ENCODE measurements at regions of chr19 and their contacts with region 1.

Region 1: DNA sequence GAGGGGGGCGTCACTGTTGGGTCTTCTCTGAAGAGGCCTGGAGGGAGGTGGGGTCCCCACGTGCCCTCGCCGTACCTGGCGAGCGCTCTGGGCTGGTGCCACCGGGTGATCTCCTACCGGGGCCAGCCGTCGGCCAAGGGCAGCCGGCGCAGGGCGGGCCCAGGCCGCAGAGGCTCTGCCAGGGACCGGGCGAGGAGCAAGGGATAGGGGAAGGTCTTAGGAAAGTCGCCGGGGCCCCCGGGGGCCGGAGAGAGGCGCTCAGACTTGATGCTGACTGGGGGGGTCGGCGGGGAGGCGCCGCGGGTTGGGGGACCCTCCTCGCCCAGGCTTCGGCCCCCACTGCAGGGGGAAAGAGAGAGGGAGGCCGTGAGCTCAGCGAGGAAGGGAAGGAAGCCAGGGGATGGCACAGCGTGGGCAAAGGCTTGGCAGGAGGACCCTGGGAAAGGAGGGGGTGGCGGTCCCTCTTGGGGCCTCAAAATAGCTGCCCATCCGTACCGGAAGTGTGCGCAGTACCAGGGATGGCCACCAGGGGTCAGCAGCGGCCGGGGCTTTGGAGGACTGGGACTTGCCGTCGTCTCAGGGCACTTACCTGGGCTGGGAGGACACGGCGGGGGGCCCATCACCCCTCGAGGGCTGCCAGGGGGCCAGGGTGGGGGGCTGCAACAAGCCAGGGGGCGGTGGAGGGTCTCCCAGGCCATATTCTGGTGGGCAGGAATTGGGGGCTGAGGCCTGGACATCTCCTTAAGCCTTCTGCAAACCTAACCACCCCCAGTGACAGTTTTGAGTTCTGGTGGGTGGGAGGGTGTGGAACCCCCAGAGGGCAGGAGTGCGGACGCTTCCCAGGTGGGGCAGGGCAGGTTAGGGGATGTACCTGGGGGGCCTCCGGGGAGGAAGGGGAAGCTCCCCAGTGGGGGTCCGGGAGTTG is 7.7 kb upstream of the TMEM161A start:
- DNase-seq: peak; percentile 62 to 98 (median 87)
- ATAC-seq: peak; percentile 82 to 98 (median 94)
- H3K4me3 ChIP-seq: no peak overlapping the region
- H3K27ac ChIP-seq: no peak overlapping the region
- H3K4me1 ChIP-seq: no peaks in the 10 kb centered on the region
- H3K27me3 ChIP-seq: no peaks in the 10 kb centered on the region
- CTCF ChIP-seq: peak; percentile 90 to 93 (median 91)

Region 2: DNA sequence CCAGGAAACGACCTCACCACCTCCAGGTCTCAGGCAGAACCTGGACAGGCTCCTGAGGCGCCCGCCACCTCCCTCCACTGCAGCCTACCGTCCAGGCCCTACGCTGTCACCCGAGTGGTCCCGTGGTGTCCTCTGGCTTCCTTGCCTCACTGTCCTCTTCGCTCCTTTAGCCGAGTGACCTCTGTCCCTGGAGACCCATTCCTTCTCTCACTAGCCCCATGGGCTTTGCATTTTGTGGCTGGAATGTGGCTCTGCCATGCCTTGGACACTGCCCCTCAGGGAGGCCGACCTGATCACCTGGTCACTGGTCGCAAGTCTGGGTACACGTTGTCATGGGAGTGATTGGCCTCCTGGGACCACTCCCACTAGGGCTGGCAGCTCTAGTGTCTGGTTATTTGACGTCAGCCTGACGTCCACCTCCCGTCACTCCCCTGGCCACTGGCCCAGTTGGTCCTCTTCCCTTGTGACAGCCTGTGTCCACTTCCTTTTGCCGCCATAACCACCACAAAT is 64.2 kb before region 1 on chr19:
- intact Hi-C with region 1: no loop called
- DNase-seq: no peak
- ATAC-seq: peak in 1 of 4 donors; percentile 11
- H3K4me3 ChIP-seq: no peak overlapping the region
- H3K27ac ChIP-seq: no peak overlapping the region
- H3K4me1 ChIP-seq: no peaks in the 10 kb centered on the region
- H3K27me3 ChIP-seq: no peaks in the 10 kb centered on the region
- CTCF ChIP-seq: no peak

Region 3: GRCh38 chr19:19342756-19343322 is 196.9 kb after region 1 on chr19:
- intact Hi-C with region 1: loop called in 1 of 3 experiments (anchors 5 kb)
- DNase-seq: peak; percentile 43 to 90 (median 76)
- ATAC-seq: peak; percentile 65 to 93 (median 88)
- H3K4me3 ChIP-seq: no peak overlapping the region
- H3K27ac ChIP-seq: no peak overlapping the region
- H3K4me1 ChIP-seq: no peaks in the 10 kb centered on the region
- H3K27me3 ChIP-seq: no peaks in the 10 kb centered on the region
- CTCF ChIP-seq: peak; percentile 77 to 88 (median 84)